CD4-positive, alpha-beta T cell (primary cell): ENCODE measurements at regions of chr2 and their contacts with region 1.

Region 1: GRCh38 chr2:174748948-174749347 is 15.3 kb downstream of the CHRNA1 start:
- DNase-seq: peak; percentile 53 to 86 (median 66)
- ATAC-seq: peak; percentile 63
- H3K4me3 ChIP-seq: no peak overlapping the region
- H3K4me3 Mint-ChIP-seq: no peak overlapping the region
- H3K27ac ChIP-seq: no peak overlapping the region
- H3K27ac Mint-ChIP-seq: no peak overlapping the region
- H3K4me1 ChIP-seq: peaks cover 40% of the 10 kb centered on the region
- H3K4me1 Mint-ChIP-seq: peaks cover 36% of the 10 kb centered on the region
- H3K27me3 ChIP-seq: no peaks in the 10 kb centered on the region
- H3K27me3 Mint-ChIP-seq: no peaks in the 10 kb centered on the region
- CTCF ChIP-seq: peak; percentile 81

Region 2: DNA sequence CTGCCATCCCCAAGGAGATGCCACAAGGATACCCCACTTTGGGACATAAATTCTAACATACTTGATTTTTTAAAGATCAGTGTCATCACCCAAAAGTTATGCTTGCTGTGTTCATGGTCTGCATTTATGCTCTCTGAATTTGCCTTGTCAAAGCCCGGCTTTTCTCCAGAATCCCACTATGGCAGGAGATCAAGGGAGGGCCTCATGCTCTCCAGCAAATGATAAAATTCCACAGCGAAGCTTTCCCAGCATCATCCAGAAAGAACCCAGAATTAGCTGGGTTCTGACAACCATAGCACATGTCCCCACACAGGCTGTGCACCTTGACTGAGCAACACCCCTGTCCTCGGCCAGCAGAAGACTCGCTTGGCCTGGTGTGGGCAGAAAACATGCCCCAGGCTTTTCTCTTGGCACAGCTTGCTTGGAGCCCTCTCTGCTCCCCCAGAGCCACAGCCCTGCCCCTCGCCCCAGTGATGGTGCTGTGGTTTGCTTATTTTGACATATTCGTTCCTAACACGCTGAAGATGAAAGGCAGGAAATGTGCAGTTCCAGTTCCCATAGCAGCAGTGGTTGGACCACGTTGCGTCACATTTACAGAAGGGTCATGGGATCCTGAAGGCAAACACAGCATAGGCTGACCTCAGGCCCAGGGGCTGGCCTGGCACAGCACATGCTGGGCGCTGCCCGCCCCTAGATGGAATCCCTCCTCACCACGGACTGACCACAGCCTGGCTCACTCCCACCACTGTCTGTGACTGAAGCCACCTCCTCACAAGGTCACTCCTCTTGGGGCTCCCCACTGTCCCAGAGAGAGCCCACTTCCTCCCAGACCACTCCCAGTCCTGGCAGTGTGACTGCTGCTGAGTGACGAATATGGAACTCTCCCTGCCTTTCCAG is 29.4 kb after region 1 on chr2:
- CTCF ChIA-PET with region 1: interaction called, 7 read pairs
- POLR2A ChIA-PET with region 1: interaction called, 4 read pairs
- intact Hi-C with region 1: loop called in 1 of 2 experiments (anchors 1 kb)
- DNase-seq: peak; percentile 55 to 93 (median 67)
- ATAC-seq: peak; percentile 86
- H3K4me3 ChIP-seq: no peak overlapping the region
- H3K4me3 Mint-ChIP-seq: peak overlapping the region; percentile 28
- H3K27ac ChIP-seq: peak overlapping the region in 1 of 2 donors; percentile 71
- H3K27ac Mint-ChIP-seq: peak overlapping the region; percentile 82
- H3K4me1 ChIP-seq: peaks cover 52% of the 10 kb centered on the region
- H3K4me1 Mint-ChIP-seq: peaks cover 55% of the 10 kb centered on the region
- H3K27me3 ChIP-seq: no peaks in the 10 kb centered on the region
- H3K27me3 Mint-ChIP-seq: no peaks in the 10 kb centered on the region
- CTCF ChIP-seq: no peak

Region 3: DNA sequence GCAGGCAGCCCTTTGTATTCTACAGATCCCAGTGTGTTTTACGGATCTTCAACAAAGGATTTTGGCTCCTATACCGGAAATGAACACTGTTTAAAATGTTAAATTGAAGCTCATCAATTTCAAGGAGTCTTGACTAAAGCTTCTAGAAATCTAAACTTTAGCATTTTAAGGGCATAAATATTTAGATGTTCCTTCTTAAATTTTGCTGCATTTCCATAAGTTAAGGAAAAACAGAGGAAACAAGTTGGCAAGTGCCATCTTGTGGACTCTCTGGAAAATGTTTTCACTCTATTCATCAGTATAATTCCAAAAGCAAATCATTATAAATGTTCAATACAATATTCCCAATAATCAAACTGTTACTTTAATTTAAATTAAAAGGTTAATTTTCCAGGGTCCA is 236.7 kb after region 1 on chr2:
- CTCF ChIA-PET with region 1: interaction called, 14 read pairs
- POLR2A ChIA-PET with region 1: interaction called, 5 read pairs
- intact Hi-C with region 1: loop called (anchors 1 to 2 kb)
- DNase-seq: no peak
- ATAC-seq: no peak
- H3K4me3 ChIP-seq: no peak overlapping the region
- H3K4me3 Mint-ChIP-seq: no peak overlapping the region
- H3K27ac ChIP-seq: no peak overlapping the region
- H3K27ac Mint-ChIP-seq: no peak overlapping the region
- H3K4me1 ChIP-seq: peaks cover 4% of the 10 kb centered on the region
- H3K4me1 Mint-ChIP-seq: no peaks in the 10 kb centered on the region
- H3K27me3 ChIP-seq: no peaks in the 10 kb centered on the region
- H3K27me3 Mint-ChIP-seq: peaks cover 8% of the 10 kb centered on the region
- CTCF ChIP-seq: peak; percentile 39